Right ventricle myocardium superior (tissue), 1 donor: ENCODE measurements at regions of chr19 and their contacts with region 1.

Region 1: GRCh38 chr19:51739466-51740213 is 12.0 kb downstream of the FPR1 start:
- DNase-seq: no peak
- ATAC-seq: no peak

Region 2: GRCh38 chr19:51724543-51724942 is 15.1 kb before region 1 on chr19:
- intact Hi-C with region 1: loop called (anchors 2 kb)
- DNase-seq: peak; percentile 51
- ATAC-seq: no peak